Sciatic nerve (tissue), 2 donors: ENCODE measurements at regions of chr13 and their contacts with region 1.

Region 1: GRCh38 chr13:99269627-99270241 is 11.6 kb upstream of the GPR18 start:
- DNase-seq: no peak
- ATAC-seq: peak; percentile 89

Region 2: DNA sequence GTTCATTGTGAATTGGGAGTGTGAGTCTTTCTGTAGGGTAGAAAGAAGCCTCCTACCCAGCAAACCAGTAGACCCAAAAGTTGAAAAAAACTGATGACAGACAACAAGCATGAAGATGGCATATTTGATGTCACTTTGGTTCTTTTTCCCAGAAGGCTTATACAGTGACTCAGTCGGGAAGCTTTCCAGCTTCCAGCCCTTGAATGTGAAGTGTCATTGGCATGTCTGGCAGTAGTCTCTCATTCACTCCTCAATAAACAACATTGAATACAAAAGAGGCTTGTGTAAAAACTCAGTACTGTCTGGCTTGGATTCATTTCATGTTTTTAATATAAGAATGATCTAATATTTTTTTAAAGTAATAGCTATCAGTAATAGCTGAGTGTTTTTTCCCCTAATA is 1247.5 kb before region 1 on chr13:
- intact Hi-C with region 1: loop called (anchors 10 kb)
- DNase-seq: no peak
- ATAC-seq: peak; percentile 89

Region 3: GRCh38 chr13:98821372-98822224 is 448.1 kb before region 1 on chr13:
- intact Hi-C with region 1: no loop called
- DNase-seq: no peak
- ATAC-seq: peak; percentile 90

Region 4: DNA sequence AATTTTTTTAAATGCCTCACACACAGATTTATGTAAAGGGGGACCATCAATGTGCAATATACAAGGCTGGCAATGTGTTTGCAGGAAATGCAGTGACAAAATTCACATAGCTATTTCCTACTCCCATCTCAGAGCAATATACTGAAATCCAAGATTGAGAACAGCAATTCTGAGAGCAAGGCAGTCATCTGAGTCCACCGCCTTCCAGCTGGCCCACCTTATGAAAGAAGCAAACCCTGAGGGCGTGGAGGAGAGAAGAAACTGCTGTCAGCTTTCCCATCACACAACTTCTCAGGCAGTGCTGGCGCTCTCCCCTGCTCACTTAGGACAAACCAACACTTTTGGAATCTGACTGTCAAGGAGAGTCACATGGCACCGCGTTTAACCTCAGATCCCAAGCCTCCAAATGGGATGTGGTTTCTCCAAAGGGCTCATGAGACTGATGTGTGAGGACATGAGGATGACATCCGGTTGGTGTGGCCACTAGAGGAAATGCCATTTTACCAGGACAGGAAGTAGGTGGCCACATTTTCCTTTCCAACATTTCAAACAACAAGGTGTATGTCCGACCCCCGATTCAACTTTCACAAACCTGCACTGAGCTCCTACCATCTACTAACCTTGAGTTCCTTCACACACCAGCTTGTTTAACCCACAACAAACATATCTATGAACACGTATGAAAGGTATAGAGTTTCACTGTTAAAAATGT is 288.2 kb before region 1 on chr13:
- intact Hi-C with region 1: no loop called
- DNase-seq: no peak
- ATAC-seq: no peak

Region 5: DNA sequence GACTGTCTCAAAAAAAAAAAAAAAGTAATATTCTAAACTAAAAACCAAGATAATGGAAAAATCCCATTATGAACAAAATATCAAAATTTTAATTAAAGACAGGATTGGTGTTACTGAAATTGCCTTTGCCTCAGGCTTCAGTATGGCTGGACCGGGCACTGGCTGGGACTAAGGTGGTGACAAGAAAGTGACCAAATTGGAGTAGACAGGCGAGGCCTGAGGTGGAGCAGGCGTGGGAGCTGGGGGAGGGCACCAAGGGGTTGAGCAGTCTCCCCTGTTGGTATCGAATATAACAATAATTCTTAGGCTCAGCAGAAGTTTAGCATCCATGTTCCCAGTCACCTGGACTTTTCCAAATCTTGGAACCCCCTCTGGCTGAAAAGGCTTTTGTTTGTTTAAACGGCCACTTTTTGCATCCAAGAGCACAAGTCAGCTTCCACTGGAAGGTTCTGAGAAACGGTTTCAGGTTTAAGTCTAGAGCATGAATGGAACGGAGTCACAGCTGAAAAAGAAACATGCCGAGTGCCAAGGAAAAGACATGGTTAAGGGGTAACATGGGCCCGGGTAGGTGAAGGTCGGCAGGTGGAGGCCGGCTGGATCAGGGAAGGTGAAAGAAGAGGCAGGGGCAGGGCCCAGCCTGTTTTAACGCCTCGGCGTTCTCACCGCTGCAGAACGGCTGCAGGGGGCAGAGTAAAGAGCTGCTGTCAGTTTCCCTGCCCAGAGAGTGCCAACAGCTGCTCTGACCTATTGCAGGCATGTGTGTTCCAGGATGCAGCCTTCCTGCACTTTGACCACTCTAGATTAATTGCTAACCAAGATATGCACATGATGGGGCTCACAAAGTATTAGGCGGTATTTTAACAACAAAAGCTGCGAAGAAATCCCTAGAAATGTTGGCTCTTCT is 335.9 kb after region 1 on chr13:
- intact Hi-C with region 1: no loop called
- DNase-seq: no peak
- ATAC-seq: peak; percentile 69